ENCODE measurements at regions of chr20 and their contacts with region 1.

Region 1: GRCh38 chr20:34029415-34029814 is 35.7 kb downstream of the RALY start:
- DNase-seq: no peak
- H3K4me3 ChIP-seq: no peak overlapping the region
- H3K27ac ChIP-seq: no peak overlapping the region
- H3K4me1 ChIP-seq: peaks cover 16% of the 10 kb centered on the region
- H3K27me3 ChIP-seq: no peaks in the 10 kb centered on the region
- CTCF ChIP-seq: no peak
- EP300 ChIP-seq: no peak
- POLR2A ChIP-seq: no peak

Region 2: GRCh38 chr20:34045294-34045693 is 15.9 kb after region 1 on chr20:
- intact Hi-C with region 1: loop called in 1 of 4 experiments (anchors 1 kb)
- DNase-seq: peak in 4 of 5 donors; percentile 29 to 55 (median 48)
- H3K4me3 ChIP-seq: no peak overlapping the region
- H3K27ac ChIP-seq: no peak overlapping the region
- H3K4me1 ChIP-seq: peaks cover 24% of the 10 kb centered on the region
- H3K27me3 ChIP-seq: no peaks in the 10 kb centered on the region
- CTCF ChIP-seq: no peak
- EP300 ChIP-seq: no peak
- POLR2A ChIP-seq: no peak

Region 3: DNA sequence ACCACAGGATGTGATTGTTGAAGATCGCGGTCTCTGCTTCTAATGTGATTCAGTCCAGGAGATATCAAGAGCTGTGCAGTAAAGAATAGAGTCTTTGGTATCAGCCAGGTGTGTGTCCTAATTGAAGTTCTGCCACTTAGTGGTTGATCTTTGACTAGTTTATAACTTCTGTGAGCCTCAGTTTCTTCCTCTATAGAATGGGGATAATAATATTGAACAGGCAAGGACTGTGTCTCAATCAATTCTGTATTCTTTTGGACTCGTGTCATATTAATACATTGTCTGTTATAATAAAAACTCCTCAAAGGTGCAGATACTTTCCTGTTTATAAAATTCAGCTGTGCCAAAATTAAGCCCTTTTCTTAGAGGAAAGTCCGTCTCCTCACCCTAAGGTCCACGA is 819.2 kb after region 1 on chr20:
- intact Hi-C with region 1: no loop called
- DNase-seq: no peak
- H3K4me3 ChIP-seq: no peak overlapping the region
- H3K27ac ChIP-seq: no peak overlapping the region
- H3K4me1 ChIP-seq: no peaks in the 10 kb centered on the region
- H3K27me3 ChIP-seq: no peaks in the 10 kb centered on the region
- CTCF ChIP-seq: no peak
- EP300 ChIP-seq: no peak
- POLR2A ChIP-seq: no peak

Measured in ovary (tissue), 10 donors.